ENCODE measurements at regions of chr1 and their contacts with region 1.

Region 1: GRCh38 chr1:41891199-41891896 is 27.4 kb downstream of the HIVEP3 start:
- DNase-seq: peak; percentile 62 to 87
- ATAC-seq: peak; percentile 61 to 80 (median 70)
- H3K4me3 ChIP-seq: peak overlapping the region; percentile 36
- H3K4me3 Mint-ChIP-seq: peak overlapping the region; percentile 88
- H3K27ac ChIP-seq: peak overlapping the region; percentile 81
- H3K27ac Mint-ChIP-seq: peak overlapping the region; percentile 90 to 92
- H3K4me1 ChIP-seq: peaks cover 85% of the 10 kb centered on the region
- H3K4me1 Mint-ChIP-seq: peaks cover 80% of the 10 kb centered on the region in 2 donors
- H3K27me3 ChIP-seq: no peaks in the 10 kb centered on the region
- H3K27me3 Mint-ChIP-seq: no peaks in the 10 kb centered on the region
- CTCF ChIP-seq: peak; percentile 27

Region 2: DNA sequence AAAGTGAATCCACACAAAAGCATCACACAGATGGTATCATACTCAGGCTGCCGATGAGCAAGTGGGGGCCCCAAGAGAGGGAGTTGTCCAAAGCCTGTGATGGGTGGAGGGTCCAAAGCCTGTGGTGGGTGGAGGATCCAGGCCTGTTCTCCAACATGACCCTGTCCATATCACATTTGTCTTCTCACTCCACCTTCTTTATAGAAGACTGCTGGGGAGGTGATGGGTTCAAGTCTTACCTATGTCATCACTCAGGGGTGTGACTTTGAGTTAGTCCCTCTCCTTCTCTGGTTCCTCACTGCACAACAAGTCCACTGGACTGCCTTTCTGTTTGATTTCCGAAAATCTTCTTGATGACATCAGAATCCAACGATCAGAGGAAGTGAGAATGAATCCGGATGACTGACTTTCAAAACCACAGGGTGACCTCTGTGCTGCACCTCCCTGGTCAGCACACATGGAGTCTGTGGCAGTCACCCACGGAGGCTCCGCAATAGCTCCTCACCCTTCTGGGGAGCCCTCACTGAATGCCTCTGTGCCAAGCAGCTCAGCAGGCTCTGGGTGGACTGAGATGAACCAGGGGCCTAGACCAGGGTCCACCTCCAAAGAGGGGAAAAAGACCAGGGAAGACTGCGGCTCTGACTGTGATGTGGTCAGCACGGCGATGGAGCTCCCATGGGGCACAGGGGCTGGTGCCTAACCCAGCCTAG is 139.4 kb before region 1 on chr1:
- intact Hi-C with region 1: loop called (anchors 5 kb)
- DNase-seq: peak in 1 of 2 donors; percentile 19
- ATAC-seq: peak; percentile 37 to 76 (median 38)
- H3K4me3 ChIP-seq: no peak overlapping the region
- H3K4me3 Mint-ChIP-seq: peak overlapping the region; percentile 13
- H3K27ac ChIP-seq: peak overlapping the region; percentile 69
- H3K27ac Mint-ChIP-seq: peak overlapping the region; percentile 38 to 42
- H3K4me1 ChIP-seq: peaks cover 55% of the 10 kb centered on the region
- H3K4me1 Mint-ChIP-seq: peaks cover 46 to 54% of the 10 kb centered on the region in 2 donors
- H3K27me3 ChIP-seq: no peaks in the 10 kb centered on the region
- H3K27me3 Mint-ChIP-seq: no peaks in the 10 kb centered on the region
- CTCF ChIP-seq: no peak

Region 3: DNA sequence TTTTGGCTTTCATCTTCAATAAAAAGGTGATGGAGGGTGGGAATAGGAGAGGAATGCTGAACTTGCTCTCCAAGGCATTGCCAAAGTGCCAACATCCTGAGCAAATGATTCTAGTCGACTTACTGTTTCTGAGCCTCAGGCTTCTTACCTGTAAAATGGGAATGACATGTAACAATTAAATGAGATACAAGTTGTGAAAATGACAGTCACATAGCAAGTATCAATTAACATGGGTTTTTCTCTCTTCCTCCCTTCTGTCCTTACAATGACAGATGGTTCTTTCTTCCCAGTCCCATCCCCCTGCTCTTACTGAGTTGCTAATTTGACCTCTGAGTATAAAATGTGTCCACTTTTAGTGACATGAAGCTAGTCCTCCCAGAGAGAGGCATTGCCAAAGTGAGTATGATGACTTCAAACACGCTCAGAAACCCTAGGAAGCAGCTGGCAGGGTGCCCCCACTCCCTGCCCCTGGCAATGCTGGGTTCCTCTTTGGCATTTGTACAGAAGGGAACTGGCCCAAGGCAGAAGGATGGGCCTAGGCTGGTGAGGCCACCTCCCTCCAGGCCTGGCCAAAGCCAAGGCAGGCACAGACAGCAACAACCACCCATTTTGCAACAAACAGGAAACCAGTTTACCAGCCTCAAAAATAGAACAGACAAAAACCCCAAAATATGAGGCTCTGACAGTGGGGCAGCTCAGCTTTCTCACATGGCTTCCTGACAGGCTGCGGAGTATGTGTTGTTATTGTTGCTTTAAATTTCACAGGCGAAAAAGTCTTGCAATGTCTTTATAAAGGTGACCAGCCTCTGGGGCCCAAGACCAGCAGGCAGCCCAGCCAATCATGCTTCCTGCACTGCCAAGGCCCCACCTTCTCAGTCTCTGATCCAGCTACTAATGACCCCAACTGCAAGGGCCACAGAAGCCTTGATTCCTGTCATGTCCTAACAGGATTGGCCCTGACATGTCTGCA is 88.5 kb before region 1 on chr1:
- intact Hi-C with region 1: loop called (anchors 5 kb)
- DNase-seq: peak; percentile 31 to 71
- ATAC-seq: peak; percentile 65 to 86 (median 83)
- H3K4me3 ChIP-seq: no peak overlapping the region
- H3K4me3 Mint-ChIP-seq: peak overlapping the region; percentile 85
- H3K27ac ChIP-seq: peak overlapping the region; percentile 89
- H3K27ac Mint-ChIP-seq: peak overlapping the region; percentile 91 to 99
- H3K4me1 ChIP-seq: peaks cover 89% of the 10 kb centered on the region
- H3K4me1 Mint-ChIP-seq: peaks cover 81 to 87% of the 10 kb centered on the region in 2 donors
- H3K27me3 ChIP-seq: no peaks in the 10 kb centered on the region
- H3K27me3 Mint-ChIP-seq: no peaks in the 10 kb centered on the region
- CTCF ChIP-seq: no peak

Region 4: GRCh38 chr1:41919764-41920397 is 28.5 kb after region 1 on chr1:
- intact Hi-C with region 1: loop called (anchors 1 kb)
- DNase-seq: peak; percentile 73 to 88
- ATAC-seq: peak; percentile 74 to 81 (median 78)
- H3K4me3 ChIP-seq: peak overlapping the region; percentile 47
- H3K4me3 Mint-ChIP-seq: peak overlapping the region; percentile 94
- H3K27ac ChIP-seq: peak overlapping the region; percentile 80
- H3K27ac Mint-ChIP-seq: peak overlapping the region; percentile 93 to 95
- H3K4me1 ChIP-seq: peaks cover 48% of the 10 kb centered on the region
- H3K4me1 Mint-ChIP-seq: peaks cover 69 to 71% of the 10 kb centered on the region in 2 donors
- H3K27me3 ChIP-seq: no peaks in the 10 kb centered on the region
- H3K27me3 Mint-ChIP-seq: no peaks in the 10 kb centered on the region
- CTCF ChIP-seq: no peak

Region 5: DNA sequence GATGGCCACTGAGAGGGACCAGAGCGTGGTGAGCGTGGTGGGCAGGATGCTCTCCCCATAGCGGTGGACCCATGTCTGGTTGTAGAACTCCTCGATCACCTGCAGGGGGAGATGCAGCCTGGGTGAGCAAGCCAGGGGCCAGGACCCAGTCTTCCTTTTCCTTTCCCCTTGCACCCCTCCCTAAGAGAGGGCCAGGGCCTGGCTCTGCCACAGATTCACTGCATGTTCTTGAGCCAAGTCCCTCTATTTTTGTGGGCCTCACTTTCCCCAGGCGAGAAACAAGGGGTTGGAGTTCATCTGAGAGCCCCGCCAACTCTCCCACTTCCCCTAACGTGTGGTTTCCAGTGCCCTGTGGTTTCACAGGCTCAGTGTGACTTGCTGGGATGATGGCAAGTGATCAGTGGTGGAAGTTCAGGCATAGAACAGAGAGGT is 1039.8 kb after region 1 on chr1:
- intact Hi-C with region 1: loop called (anchors 10 kb)
- DNase-seq: peak; percentile 64 to 85
- ATAC-seq: peak; percentile 39 to 58 (median 40)
- H3K4me3 ChIP-seq: no peak overlapping the region
- H3K4me3 Mint-ChIP-seq: peak overlapping the region; percentile 88
- H3K27ac ChIP-seq: peak overlapping the region; percentile 92
- H3K27ac Mint-ChIP-seq: peak overlapping the region; percentile 96 to 98
- H3K4me1 ChIP-seq: peaks cover 77% of the 10 kb centered on the region
- H3K4me1 Mint-ChIP-seq: peaks cover 78 to 86% of the 10 kb centered on the region in 2 donors
- H3K27me3 ChIP-seq: no peaks in the 10 kb centered on the region
- H3K27me3 Mint-ChIP-seq: no peaks in the 10 kb centered on the region
- CTCF ChIP-seq: peak; percentile 69